Dendritic cell treated with granulocyte-macrophage colony-stimulating factor and Interleukin-4, amounts not matched to agents 40 ng/mL and 50 ng/mL, for 4 days (primary cell): ENCODE measurements at regions of chr17 and their contacts with region 1.

Region 1: DNA sequence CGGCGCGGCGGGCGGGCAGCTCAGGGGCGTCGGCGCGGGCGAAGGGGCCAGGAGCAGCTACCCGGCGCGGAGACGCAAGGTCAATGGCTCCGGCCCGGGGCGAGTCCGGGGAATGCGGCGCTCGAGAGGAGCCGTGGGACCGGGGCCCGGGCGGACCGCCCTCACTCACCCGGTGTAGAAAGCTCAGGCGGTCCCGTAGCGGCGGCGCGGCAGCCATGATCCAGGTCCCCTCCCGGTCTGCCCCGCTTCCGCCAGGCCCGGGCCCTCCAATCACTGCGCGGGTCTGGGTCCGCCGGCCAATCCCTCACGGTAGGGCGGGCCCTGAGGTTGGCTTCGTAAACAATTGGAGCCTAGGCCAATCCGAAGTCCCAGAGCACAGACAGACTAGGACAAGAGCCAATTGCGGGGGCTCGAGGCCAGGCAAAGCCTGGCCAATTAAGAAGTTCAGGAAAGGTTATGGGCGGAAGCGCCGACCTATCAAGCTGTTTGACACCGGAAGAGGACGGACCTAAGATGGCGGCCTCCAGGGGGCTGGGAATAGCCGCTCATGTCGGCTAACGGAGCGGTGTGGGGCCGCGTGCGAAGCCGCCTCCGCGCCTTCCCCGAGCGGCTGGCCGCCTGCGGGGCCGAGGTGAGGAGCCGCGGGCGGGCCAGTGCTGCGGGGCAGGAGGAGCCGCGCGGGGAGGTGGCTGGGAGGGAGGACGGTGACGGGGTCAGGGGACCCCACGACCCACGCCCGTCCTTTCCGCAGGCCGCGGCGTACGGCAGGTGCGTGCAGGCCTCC is at the starts of genes NDUFAF8 and TEPSIN:
- H3K4me3 Mint-ChIP-seq: peak within 1 kb of the TSS; percentile 90
- H3K27ac Mint-ChIP-seq: peak within 1 kb of the TSS; percentile 81
- H3K4me1 Mint-ChIP-seq: peaks cover 62% of the 10 kb centered on the region
- H3K27me3 Mint-ChIP-seq: no peaks in the 10 kb centered on the region

Region 2: DNA sequence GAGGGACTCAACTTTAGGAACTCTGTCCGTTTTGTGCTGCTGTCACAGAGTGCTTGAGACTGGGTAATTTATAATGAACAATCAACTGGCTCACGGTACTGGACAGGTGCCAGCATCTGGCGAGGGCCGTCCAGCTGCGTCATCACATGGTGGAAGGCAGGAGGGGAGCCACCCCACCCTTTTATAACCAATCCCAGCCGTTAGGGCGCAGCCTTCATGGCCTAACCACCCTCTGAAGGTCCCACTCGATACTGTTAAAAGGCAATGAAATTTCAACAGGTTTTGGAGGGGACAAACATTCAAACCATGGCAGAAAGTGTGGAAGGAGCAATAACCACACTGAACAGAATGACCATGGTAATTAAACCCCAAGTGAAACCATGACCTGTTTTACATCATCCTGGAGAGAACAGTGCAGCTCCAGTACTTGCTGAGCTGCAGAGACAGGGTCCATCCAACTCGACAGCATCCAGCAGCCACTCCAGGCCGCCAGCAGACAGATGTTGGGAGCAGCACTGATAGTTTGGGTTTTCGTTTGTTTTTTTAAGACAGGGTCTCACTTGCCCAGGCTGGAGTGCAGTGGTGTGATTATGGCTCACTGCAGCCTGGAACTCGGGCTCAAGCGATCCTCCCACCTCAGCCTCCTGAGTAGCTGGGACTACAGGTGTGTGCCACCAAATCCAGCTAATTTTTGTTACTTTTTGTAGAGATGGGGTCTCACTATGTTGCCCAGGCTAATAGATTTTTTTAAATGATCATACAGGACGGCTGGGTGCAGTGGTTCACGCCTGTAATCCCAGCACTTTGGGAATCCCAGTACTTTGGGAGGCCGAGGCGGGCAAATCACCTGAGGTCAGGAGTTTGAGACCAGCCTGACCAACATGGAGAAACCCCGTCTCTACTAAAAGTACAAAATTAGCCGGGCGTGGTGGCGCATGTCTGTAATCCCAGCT is 236.3 kb before region 1 on chr17:
- intact Hi-C with region 1: no loop called
- H3K4me3 Mint-ChIP-seq: no peak overlapping the region
- H3K27ac Mint-ChIP-seq: no peak overlapping the region
- H3K4me1 Mint-ChIP-seq: peaks cover 41% of the 10 kb centered on the region
- H3K27me3 Mint-ChIP-seq: peaks cover 50% of the 10 kb centered on the region

Region 3: GRCh38 chr17:81148986-81149533 is 89.9 kb before region 1 on chr17:
- intact Hi-C with region 1: loop called (anchors 2 kb)
- H3K4me3 Mint-ChIP-seq: no peak overlapping the region
- H3K27ac Mint-ChIP-seq: peak overlapping the region; percentile 96
- H3K4me1 Mint-ChIP-seq: peaks cover 58% of the 10 kb centered on the region
- H3K27me3 Mint-ChIP-seq: no peaks in the 10 kb centered on the region

Region 4: GRCh38 chr17:81222906-81223761 is 15.9 kb before region 1 on chr17 and contains the start of gene CEP131:
- intact Hi-C with region 1: loop called (anchors 2 kb)
- H3K4me3 Mint-ChIP-seq: peak within 1 kb of the TSS; percentile 78
- H3K27ac Mint-ChIP-seq: peak within 1 kb of the TSS; percentile 81
- H3K4me1 Mint-ChIP-seq: peaks cover 38% of the 10 kb centered on the region
- H3K27me3 Mint-ChIP-seq: peaks cover 1% of the 10 kb centered on the region